ENCODE measurements at regions of chr6 and their contacts with region 1.

Region 1: GRCh38 chr6:44475779-44476434 is 88.4 kb downstream of the CDC5L start:
- DNase-seq: peak; percentile 87 to 89
- H3K4me3 ChIP-seq: no peak overlapping the region
- H3K4me1 ChIP-seq: peaks cover 8% of the 10 kb centered on the region
- H3K27me3 ChIP-seq: no peaks in the 10 kb centered on the region

Region 2: DNA sequence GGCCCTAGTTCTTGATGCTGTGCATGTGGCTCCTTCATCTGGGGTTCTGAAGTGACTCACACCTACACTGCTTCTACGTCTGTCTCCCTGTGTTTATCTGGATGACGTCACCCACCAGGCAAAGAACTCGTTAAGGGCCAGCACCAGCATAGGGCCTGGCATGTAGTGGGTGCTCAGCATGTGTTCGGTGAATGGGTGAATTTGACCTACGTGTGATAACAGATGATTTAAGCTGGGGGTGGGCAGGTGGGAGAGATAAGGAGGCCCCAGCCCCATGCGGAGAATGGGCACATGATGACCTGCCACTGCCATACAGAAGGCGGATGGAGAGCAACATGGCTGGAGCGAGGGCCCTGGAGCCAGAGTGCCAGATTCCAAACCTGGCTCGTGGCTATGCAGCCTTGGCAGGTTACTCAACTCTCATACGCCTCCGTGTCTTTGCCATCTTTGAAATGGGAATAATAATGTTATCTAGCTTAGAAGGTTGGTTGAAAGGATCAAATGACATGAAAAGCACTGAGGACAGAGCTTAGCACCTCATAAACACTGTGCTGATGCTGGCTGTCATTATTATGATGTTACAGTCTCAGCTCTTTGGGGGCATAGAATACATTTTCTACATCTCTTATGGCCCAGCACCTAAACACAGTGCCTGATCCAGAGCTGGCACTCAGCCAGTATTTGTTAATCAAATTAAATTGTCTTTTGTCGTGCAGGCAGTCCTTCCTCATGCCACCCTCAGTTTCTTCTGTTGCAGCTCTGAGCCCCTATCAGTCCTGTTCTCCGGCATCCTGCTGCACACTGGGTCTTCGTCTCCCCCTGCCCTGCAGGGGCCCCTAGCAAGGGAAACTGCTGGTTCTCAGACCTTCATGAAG is 666.3 kb before region 1 on chr6:
- in situ Hi-C with region 1: no loop called
- DNase-seq: no peak
- H3K4me3 ChIP-seq: no peak overlapping the region
- H3K4me1 ChIP-seq: no peaks in the 10 kb centered on the region
- H3K27me3 ChIP-seq: no peaks in the 10 kb centered on the region

Region 3: DNA sequence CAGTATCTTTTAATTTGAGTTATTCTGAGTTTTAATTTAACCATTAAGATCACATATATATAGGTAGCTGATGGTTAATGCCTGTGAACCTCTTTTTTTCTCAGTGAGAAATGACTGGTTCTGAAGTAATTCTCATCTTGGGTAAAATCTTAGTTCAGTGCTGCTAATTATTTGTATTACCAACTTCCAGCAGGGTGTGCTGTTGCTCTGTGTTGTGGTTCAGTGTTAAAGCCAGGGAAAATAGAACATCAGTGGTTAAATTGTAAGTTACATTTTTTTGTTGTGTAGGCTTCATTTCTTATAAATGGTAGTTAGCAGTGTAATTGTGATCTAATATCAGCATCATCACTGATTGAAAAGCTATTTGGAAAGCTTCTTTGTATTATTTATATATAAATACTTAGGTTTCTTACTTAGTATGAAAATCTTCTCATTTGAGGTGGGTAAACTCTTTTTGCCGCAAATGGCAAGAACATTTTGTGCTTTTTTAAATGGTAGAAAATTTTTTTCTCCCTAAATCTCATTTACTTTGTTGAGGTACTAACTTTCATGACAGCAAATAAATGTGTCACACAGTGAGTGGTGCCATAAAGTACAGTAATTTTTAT is 44.7 kb before region 1 on chr6:
- in situ Hi-C with region 1: no loop called
- DNase-seq: peak; percentile 12 to 59
- H3K4me3 ChIP-seq: no peak overlapping the region
- H3K4me1 ChIP-seq: no peaks in the 10 kb centered on the region
- H3K27me3 ChIP-seq: no peaks in the 10 kb centered on the region

Region 4: DNA sequence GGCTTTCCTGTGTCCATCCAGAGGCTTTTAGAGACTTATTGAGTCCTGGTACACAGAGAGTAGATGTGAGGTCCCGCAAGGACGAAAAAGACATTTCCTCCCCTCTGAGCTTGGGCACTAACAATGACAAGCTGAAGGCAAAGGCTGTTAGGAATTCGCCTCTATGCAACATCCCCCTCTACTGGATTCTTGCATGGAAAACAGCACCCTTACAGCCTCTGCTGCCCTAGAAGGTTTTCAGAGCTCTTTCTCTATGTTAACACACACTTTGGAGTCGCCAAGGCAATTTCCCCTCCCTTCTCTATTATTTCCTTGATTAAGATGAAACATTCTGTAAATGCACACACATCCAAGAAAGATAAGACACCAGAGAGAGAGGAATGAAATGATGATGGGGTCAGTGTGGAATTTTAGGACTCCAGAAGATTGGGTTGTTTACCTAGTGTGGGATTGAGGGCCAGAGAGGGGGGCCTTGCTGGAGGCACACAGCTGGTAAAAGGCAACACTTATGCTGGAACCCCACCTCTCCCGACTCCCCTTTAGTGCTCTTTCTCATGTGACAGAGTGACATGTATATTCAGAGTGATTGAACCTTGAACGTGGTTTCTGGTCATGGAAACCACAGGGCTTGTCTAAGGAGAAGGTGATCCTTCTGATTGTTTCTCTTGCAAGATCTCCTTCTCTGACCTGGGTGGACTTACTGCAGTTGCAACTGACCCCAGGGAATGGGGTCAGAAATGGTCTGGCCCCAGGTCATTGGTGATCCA is 1239.0 kb after region 1 on chr6:
- in situ Hi-C with region 1: loop called (anchors 10 kb)
- DNase-seq: peak; percentile 57 to 61
- H3K4me3 ChIP-seq: no peak overlapping the region
- H3K4me1 ChIP-seq: no peaks in the 10 kb centered on the region
- H3K27me3 ChIP-seq: no peaks in the 10 kb centered on the region